MCF 10A (cell line): ENCODE measurements at regions of chr9 and their contacts with region 1.

Region 1: GRCh38 chr9:97921959-97922724 is at the start of gene TRMO:
- DNase-seq: peak; percentile 97
- H3K4me3 Mint-ChIP-seq: peak within 1 kb of the TSS; percentile 87
- H3K27ac Mint-ChIP-seq: peak within 1 kb of the TSS; percentile 100
- H3K4me1 Mint-ChIP-seq: peaks cover 19% of the 10 kb centered on the region
- H3K27me3 Mint-ChIP-seq: peaks cover 25% of the 10 kb centered on the region
- CTCF ChIP-seq: peak; percentile 36
- total RNA-seq, gene TRMO: 10.0 and 10.3 TPM in 2 replicates

Region 2: GRCh38 chr9:97632985-97633858 is 288.9 kb before region 1 on chr9 and contains the starts of genes NCBP1 and TSTD2:
- CTCF ChIA-PET with region 1: interaction called, 3 read pairs
- POLR2A ChIA-PET with region 1: interaction called, 16 read pairs
- intact Hi-C with region 1: no loop called
- DNase-seq: peak; percentile 98
- H3K4me3 Mint-ChIP-seq: peak within 1 kb of the TSS; percentile 83
- H3K27ac Mint-ChIP-seq: peak within 1 kb of the TSS; percentile 99
- H3K4me1 Mint-ChIP-seq: peaks cover 34% of the 10 kb centered on the region
- H3K27me3 Mint-ChIP-seq: no peaks in the 10 kb centered on the region
- CTCF ChIP-seq: no peak
- total RNA-seq, gene NCBP1: 35.6 and 38.7 TPM in 2 replicates
- total RNA-seq, gene TSTD2: 18.0 and 19.0 TPM in 2 replicates

Region 3: DNA sequence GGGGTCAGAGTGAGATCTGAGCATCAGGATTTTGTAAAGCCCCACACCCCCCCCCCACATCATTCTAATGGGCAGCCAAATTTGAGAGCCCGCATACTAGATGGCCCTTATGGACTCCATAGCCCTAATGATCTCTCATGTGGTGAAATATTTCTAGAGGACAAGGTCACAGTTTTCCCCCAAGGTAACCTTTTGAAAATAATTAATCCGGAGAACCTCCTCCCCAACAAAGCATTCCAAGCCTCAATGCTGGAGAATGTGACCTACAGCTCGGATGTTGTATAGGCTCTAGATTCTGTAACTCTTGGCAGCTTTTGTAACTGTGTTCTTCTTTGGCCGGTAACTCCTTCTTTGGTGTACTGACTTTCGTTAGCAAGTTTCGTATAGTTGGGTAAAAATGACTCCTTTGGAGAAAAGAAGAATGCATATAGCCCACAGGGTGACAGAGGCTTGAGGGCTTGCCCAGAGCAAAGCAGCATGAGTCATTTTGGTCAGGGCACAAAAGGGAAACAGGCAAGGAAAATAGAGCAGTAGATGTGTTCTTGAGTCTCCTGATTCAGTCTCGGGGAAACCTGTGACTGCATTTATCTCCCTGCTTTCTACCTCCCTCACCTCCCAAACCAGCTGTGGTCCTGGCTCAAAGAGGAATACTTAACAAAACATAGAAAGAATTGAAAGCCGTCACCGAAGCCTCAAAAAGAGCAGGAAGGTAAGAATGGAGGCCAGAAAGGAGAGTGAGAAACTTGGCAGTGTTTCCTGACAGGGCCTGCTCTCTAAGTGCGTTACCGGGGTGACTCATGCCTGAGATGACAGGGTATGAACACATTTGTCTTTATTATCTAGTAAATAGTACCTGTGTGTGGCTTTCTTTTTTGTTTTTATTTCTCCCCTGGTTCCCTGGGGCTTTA is 218.5 kb before region 1 on chr9:
- CTCF ChIA-PET with region 1: interaction called, 13 read pairs
- POLR2A ChIA-PET with region 1: interaction called, 25 read pairs
- intact Hi-C with region 1: no loop called
- DNase-seq: peak; percentile 88
- H3K4me3 Mint-ChIP-seq: peak overlapping the region; percentile 60
- H3K27ac Mint-ChIP-seq: peak overlapping the region; percentile 97
- H3K4me1 Mint-ChIP-seq: peaks cover 32% of the 10 kb centered on the region
- H3K27me3 Mint-ChIP-seq: no peaks in the 10 kb centered on the region
- CTCF ChIP-seq: no peak

Region 4: DNA sequence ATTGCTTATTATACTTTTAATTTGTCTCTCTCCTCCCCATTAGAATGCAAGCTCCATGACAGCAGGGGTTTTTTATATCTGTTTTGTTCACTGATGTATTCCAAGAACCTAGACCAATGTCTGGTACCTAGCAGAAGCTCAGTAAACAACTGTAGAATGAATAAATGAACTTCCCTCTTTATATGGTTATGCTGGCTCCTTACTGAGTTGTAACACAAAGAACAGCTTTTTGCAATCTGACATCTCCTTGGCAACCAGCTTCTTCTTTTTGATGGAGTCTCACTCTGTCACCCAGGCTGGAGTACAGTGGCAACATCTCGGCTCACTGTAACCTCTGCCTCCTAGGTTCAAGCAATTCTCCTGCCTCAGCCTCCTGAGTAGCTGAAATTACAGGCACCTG is 13.4 kb before region 1 on chr9:
- CTCF ChIA-PET with region 1: interaction called, 26 read pairs
- POLR2A ChIA-PET with region 1: interaction called, 31 read pairs
- intact Hi-C with region 1: no loop called
- DNase-seq: no peak
- H3K4me3 Mint-ChIP-seq: no peak overlapping the region
- H3K27ac Mint-ChIP-seq: no peak overlapping the region
- H3K4me1 Mint-ChIP-seq: peaks cover 20% of the 10 kb centered on the region
- H3K27me3 Mint-ChIP-seq: no peaks in the 10 kb centered on the region
- CTCF ChIP-seq: no peak

Region 5: GRCh38 chr9:97982683-97983588 is 60.8 kb after region 1 on chr9 and contains the start of gene ANP32B:
- CTCF ChIA-PET with region 1: interaction called, 10 read pairs
- POLR2A ChIA-PET with region 1: interaction called, 91 read pairs
- intact Hi-C with region 1: loop called (anchors 1 kb)
- DNase-seq: peak; percentile 91
- H3K4me3 Mint-ChIP-seq: peak within 1 kb of the TSS; percentile 79
- H3K27ac Mint-ChIP-seq: peak within 1 kb of the TSS; percentile 63
- H3K4me1 Mint-ChIP-seq: peaks cover 31% of the 10 kb centered on the region
- H3K27me3 Mint-ChIP-seq: no peaks in the 10 kb centered on the region
- CTCF ChIP-seq: peak; percentile 83
- total RNA-seq, gene ANP32B: 218 and 245 TPM in 2 replicates

Region 6: GRCh38 chr9:98207606-98208005 is 285.5 kb after region 1 on chr9:
- CTCF ChIA-PET with region 1: interaction called, 4 read pairs
- POLR2A ChIA-PET with region 1: interaction called, 4 read pairs
- intact Hi-C with region 1: loop called (anchors 5 kb)
- DNase-seq: no peak
- H3K4me3 Mint-ChIP-seq: no peak overlapping the region
- H3K27ac Mint-ChIP-seq: peak overlapping the region; percentile 39
- H3K4me1 Mint-ChIP-seq: no peaks in the 10 kb centered on the region
- H3K27me3 Mint-ChIP-seq: no peaks in the 10 kb centered on the region
- CTCF ChIP-seq: no peak

Region 7: DNA sequence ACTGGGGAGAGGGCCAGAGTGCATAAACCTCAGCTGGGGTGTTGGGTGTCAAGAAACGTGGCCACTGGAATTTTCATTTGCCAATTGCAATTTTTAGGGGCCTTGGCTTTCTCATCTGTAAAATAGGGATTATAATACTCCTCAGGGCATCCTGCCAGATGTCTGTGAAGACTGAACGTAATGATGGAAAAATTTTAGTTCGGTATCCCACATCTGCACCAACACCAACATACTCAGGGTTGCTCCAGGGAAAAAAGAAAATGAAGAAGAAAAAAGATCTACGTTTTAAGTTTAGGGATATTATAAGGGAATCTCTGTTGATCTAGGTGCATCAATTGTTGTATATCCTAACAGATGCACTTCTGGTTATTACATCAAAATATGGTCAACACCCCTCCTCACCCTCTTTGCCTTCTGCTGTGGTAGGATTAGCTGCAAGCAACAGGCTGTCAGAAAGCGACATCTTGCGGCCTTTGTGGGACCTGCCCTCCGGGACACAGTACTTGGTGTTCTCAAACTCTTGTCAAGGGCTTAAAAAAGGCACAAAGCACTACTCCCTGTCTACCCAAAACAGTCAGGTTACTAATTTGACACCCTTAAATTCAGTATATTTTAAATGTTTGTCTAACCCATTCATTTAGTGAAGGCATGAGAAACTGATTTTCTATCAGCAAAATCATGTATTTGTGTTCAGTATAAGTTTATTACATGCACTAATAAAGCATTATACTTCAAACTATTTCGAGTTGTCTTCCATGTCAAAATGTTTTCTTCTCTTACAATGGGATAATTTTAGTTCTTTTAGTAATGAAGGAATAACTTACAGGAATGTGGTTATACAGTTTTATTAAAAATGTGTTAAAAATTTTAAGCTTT is 341.6 kb after region 1 on chr9:
- CTCF ChIA-PET with region 1: interaction called, 8 read pairs
- POLR2A ChIA-PET with region 1: no interaction called
- intact Hi-C with region 1: loop called (anchors 1 kb)
- DNase-seq: peak; percentile 83
- H3K4me3 Mint-ChIP-seq: no peak overlapping the region
- H3K27ac Mint-ChIP-seq: no peak overlapping the region
- H3K4me1 Mint-ChIP-seq: peaks cover 14% of the 10 kb centered on the region
- H3K27me3 Mint-ChIP-seq: no peaks in the 10 kb centered on the region
- CTCF ChIP-seq: peak; percentile 96